ENCODE measurements at regions of chr7 and their contacts with region 1.

Region 1: DNA sequence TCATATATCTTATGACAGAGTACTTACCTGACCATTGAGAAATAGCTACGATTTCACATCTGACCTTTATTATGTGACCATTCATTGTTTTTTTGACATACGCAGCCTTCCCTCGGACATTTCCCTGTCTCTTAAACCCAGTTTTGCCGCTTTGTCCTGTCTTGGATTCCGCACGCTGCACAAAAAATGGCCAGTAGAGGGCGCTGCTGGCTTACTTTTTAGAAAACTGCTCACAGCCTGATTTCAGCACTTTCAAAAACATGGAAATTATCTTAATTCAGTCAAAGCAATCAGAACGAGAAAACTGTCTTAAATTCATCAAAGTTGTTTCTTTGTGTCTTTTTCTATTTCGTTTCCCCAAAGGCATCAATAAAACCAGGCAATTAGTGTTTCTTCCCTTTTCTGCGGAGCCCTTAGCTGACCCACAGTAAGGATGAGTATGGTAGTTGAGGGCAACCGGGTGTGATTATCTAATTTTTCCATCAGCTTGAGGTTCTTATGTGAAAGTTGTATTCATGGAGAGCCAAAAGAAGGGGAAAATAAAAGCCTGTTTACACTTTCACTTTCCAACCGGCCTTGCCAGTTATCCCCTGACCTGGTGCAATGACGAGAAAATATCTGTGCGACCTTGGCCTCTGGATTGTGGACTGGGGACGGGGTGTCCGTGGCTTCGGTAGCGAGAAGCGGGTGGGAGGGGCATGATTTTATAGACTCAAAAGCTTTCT is 144.4 kb downstream of the DYNC1I1 start:
- DNase-seq: peak; percentile 43 to 76
- H3K4me3 ChIP-seq: no peak overlapping the region
- H3K27ac ChIP-seq: no peak overlapping the region
- H3K4me1 ChIP-seq: no peaks in the 10 kb centered on the region
- H3K27me3 ChIP-seq: no peaks in the 10 kb centered on the region; the same call in 1 of the 2 replicates
- CTCF ChIP-seq: peak; percentile 92

Region 2: DNA sequence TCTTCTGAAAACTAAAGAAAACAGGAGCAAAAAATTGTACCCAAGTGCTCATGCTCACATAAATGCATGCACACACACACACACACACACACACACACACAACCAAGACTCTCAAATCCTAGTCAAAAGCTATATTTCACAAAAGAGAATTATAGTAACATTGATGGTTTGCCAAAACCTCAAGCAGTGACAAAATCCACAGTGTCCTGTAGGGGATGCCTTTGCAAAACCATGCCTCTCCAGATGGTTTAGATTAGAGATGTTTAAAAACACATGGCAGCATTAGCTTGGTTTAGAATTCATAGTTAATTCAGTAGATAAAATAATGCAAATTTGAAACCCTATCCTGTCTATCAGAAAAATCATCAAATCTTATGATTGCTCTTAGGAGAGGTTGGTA is 87.8 kb after region 1 on chr7:
- CTCF ChIA-PET with region 1: no interaction called
- POLR2A ChIA-PET with region 1: no interaction called
- intact Hi-C with region 1: no loop called
- DNase-seq: no peak
- H3K4me3 ChIP-seq: no peak overlapping the region
- H3K27ac ChIP-seq: no peak overlapping the region
- H3K4me1 ChIP-seq: no peaks in the 10 kb centered on the region
- H3K27me3 ChIP-seq: no peaks in the 10 kb centered on the region
- CTCF ChIP-seq: no peak

Region 3: GRCh38 chr7:97027427-97028234 is 1110.9 kb after region 1 on chr7:
- CTCF ChIA-PET with region 1: no interaction called
- POLR2A ChIA-PET with region 1: no interaction called
- intact Hi-C with region 1: loop called (anchors 1 kb)
- DNase-seq: peak; percentile 51 to 67
- H3K4me3 ChIP-seq: no peak overlapping the region
- H3K27ac ChIP-seq: no peak overlapping the region
- H3K4me1 ChIP-seq: peaks cover 4% of the 10 kb centered on the region; the same call in 1 of the 2 replicates
- H3K27me3 ChIP-seq: no peaks in the 10 kb centered on the region; the same call in 1 of the 2 replicates
- CTCF ChIP-seq: peak; percentile 90

Region 4: GRCh38 chr7:97064967-97065587 is 1148.3 kb after region 1 on chr7:
- CTCF ChIA-PET with region 1: no interaction called
- POLR2A ChIA-PET with region 1: no interaction called
- intact Hi-C with region 1: loop called (anchors 1 kb)
- DNase-seq: peak; percentile 10 to 39
- H3K4me3 ChIP-seq: no peak overlapping the region
- H3K27ac ChIP-seq: no peak overlapping the region
- H3K4me1 ChIP-seq: no peaks in the 10 kb centered on the region
- H3K27me3 ChIP-seq: no peaks in the 10 kb centered on the region
- CTCF ChIP-seq: peak; percentile 77

Region 5: GRCh38 chr7:97179454-97180104 is 1262.8 kb after region 1 on chr7:
- CTCF ChIA-PET with region 1: no interaction called
- POLR2A ChIA-PET with region 1: no interaction called
- intact Hi-C with region 1: loop called (anchors 5 kb)
- DNase-seq: peak in 1 of 2 experiments; percentile 27
- H3K4me3 ChIP-seq: no peak overlapping the region
- H3K27ac ChIP-seq: no peak overlapping the region
- H3K4me1 ChIP-seq: no peaks in the 10 kb centered on the region
- H3K27me3 ChIP-seq: no peaks in the 10 kb centered on the region
- CTCF ChIP-seq: peak; percentile 80

Region 6: GRCh38 chr7:97409346-97409745 is 1492.6 kb after region 1 on chr7:
- CTCF ChIA-PET with region 1: no interaction called
- POLR2A ChIA-PET with region 1: interaction called, 10 read pairs
- intact Hi-C with region 1: no loop called
- DNase-seq: no peak
- H3K4me3 ChIP-seq: no peak overlapping the region
- H3K27ac ChIP-seq: no peak overlapping the region
- H3K4me1 ChIP-seq: no peaks in the 10 kb centered on the region
- H3K27me3 ChIP-seq: peaks cover 32% of the 10 kb centered on the region
- CTCF ChIP-seq: no peak

Region 7: GRCh38 chr7:97835296-97836138 is 1918.8 kb after region 1 on chr7:
- CTCF ChIA-PET with region 1: no interaction called
- POLR2A ChIA-PET with region 1: no interaction called
- intact Hi-C with region 1: loop called (anchors 5 kb)
- DNase-seq: peak; percentile 42 to 51
- H3K4me3 ChIP-seq: no peak overlapping the region
- H3K27ac ChIP-seq: no peak overlapping the region
- H3K4me1 ChIP-seq: no peaks in the 10 kb centered on the region
- H3K27me3 ChIP-seq: peaks cover 42% of the 10 kb centered on the region
- CTCF ChIP-seq: peak; percentile 83

Region 8: GRCh38 chr7:97845622-97846203 is 1929.0 kb after region 1 on chr7:
- CTCF ChIA-PET with region 1: no interaction called
- POLR2A ChIA-PET with region 1: interaction called, 3 read pairs
- intact Hi-C with region 1: loop called (anchors 5 kb)
- DNase-seq: no peak
- H3K4me3 ChIP-seq: no peak overlapping the region
- H3K27ac ChIP-seq: no peak overlapping the region
- H3K4me1 ChIP-seq: no peaks in the 10 kb centered on the region
- H3K27me3 ChIP-seq: peaks cover 7% of the 10 kb centered on the region
- CTCF ChIP-seq: peak; percentile 75

Measured in PC-9 (cell line).